Activated CD4-positive, alpha-beta memory T cell treated with anti-CD3 and anti-CD28 coated beads for 36 hours (primary cell): ENCODE measurements at regions of chr14 and their contacts with region 1.

Region 1: DNA sequence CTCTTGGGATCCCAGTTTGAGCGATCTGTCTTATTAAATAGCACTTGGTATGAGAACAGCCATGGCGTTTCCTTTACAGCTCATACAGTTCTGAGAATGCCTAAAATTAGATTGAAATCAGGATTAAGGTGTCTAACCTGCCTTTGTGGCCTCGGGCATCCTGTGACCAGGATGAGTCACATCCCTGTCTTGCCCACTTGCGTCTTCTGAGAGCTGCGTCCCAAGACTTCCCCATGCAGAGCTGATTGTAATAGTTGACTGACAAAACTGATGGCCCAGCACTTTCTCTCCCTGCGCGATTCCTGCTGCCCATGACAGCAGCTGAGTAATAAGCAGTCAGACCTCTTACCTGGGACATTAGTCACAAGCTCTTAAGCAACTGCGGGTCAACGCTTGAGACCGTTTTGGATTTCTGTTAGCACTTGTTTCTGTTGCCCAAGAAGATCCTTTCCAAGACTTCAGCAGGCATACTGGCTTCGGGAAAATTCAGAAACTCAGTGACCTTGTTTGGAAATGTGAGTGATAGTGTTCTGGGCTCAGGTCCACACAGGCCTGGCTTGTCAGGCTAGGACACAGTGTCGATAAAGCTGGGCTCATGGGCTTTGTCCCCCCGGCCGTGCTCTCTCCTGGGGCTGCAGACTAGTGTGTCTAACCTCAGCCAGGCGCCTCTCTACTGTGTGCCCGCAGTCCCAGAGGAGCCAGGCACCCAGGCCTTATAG is 169.9 kb upstream of the HIF1A start:
- DNase-seq: peak; percentile 92
- H3K4me3 Mint-ChIP-seq: peak overlapping the region; percentile 63
- H3K27ac Mint-ChIP-seq: peak overlapping the region; percentile 91
- H3K4me1 Mint-ChIP-seq: peaks cover 88% of the 10 kb centered on the region
- H3K27me3 Mint-ChIP-seq: no peaks in the 10 kb centered on the region

Region 2: GRCh38 chr14:61385002-61385685 is 140.3 kb before region 1 on chr14:
- CTCF ChIA-PET with region 1: no interaction called
- POLR2A ChIA-PET with region 1: no interaction called
- intact Hi-C with region 1: no loop called
- DNase-seq: peak; percentile 73
- H3K4me3 Mint-ChIP-seq: no peak overlapping the region
- H3K27ac Mint-ChIP-seq: no peak overlapping the region
- H3K4me1 Mint-ChIP-seq: peaks cover 29% of the 10 kb centered on the region
- H3K27me3 Mint-ChIP-seq: no peaks in the 10 kb centered on the region

Region 3: DNA sequence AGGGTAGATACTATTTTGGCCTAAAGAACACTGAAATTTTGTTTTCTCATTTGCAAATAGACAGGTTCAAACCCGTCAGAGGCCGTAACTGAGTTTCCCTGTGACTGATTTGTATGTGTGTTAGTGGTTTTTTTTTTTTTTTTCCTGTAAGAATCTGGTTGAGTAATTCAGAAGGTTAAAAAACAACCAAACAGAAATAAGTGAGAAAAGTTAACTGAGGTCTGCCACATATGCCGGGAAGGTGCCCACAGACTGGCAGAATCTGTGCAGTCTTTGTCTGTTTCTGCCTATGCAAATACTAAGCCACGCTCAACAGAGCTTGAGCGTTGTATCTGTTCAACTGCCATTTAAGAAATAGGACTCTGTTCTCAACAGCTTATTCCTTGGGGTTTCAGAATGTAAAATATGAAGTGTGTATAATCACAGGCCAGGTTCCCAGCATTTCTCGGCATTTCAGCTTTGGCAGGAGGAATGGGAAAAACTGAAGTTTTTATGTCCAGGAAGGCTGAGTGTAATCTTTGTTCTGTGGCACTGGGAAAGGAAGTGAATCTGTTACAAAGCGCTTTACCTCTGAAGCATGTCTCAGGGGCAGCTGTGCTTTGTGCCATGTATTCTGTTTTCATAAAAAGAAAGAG is 22.2 kb before region 1 on chr14:
- CTCF ChIA-PET with region 1: interaction called, 12 read pairs
- POLR2A ChIA-PET with region 1: interaction called, 9 read pairs
- intact Hi-C with region 1: loop called (anchors 1 kb)
- DNase-seq: peak; percentile 90
- H3K4me3 Mint-ChIP-seq: peak overlapping the region; percentile 62
- H3K27ac Mint-ChIP-seq: peak overlapping the region; percentile 98
- H3K4me1 Mint-ChIP-seq: peaks cover 98% of the 10 kb centered on the region
- H3K27me3 Mint-ChIP-seq: no peaks in the 10 kb centered on the region

Region 4: DNA sequence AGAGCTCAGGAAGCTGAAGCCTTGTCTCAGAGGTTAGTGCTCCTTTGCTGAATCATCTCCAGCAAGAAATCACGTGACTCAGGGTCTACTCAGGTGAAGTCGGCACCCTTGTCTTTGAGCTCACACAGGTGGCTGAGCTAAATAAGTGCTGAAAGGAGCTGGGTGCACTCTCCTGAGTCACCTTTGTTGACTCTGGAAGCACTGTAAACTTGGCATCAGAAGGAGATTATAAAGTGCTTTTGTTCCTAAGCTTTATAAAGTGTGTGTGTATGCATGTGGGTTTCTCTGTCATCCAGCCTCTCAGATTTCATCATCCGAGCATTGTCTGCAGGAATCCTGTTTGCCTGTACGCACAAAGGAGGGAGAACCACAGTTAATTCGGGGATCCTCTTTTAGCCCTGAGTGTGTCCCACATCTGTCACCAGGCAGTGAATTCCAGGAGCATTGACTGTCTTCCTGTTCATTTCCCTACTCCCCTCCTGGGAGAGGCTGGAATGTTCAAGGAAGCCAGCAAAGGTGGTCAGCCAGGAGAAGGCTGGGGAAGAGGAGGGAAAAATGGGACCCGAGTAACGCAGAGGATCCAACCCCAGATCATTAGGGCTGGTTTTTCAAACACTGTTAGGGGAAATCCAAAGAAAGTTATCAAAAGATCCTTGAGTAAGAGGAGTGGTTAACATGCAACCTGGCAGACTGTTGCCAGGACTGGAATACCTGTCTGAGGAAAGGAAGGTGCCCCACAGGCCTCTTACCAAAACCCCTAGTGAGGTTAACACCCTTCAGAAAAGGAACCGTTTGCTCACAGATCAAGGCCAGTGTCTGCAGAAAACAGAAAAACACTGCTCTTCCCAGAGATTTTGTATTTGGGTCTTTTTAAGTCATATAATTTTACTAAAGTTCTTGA is 12.4 kb after region 1 on chr14:
- CTCF ChIA-PET with region 1: no interaction called
- POLR2A ChIA-PET with region 1: interaction called, 6 read pairs
- intact Hi-C with region 1: loop called (anchors 1 kb)
- DNase-seq: peak; percentile 71
- H3K4me3 Mint-ChIP-seq: peak overlapping the region; percentile 1
- H3K27ac Mint-ChIP-seq: peak overlapping the region; percentile 77
- H3K4me1 Mint-ChIP-seq: peaks cover 81% of the 10 kb centered on the region
- H3K27me3 Mint-ChIP-seq: no peaks in the 10 kb centered on the region

Region 5: DNA sequence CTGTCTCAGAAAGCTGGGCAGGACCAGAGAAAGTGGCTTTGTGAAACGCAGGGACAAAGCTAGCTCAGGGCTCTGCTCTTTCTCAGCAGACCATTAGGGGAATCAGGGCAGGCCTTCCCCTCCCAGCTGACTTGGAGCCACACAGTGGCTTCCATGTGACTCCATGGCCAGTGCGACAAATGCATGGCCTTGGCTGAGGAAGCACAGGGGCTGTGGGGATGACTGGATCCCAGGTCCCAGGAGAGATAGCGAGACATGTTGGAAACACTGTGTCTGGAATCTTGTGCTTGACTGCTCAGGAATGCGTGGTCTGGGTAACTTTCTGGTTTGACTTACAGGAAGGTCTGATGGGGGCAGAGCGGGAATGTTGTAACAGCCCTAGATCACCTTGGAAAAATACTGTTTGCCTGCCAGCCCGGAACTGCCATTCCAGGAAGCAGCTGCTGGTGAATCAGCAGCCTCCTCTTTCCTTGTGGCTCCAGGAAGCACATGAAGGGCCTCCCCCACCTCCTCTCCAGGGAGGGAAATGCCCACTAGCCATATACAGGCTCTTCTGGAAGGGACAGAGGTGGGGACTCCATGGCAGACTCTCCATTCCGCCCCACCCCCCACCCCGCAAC is 36.3 kb after region 1 on chr14:
- CTCF ChIA-PET with region 1: interaction called, 5 read pairs
- POLR2A ChIA-PET with region 1: interaction called, 16 read pairs
- intact Hi-C with region 1: loop called (anchors 1 kb)
- DNase-seq: no peak
- H3K4me3 Mint-ChIP-seq: no peak overlapping the region
- H3K27ac Mint-ChIP-seq: peak overlapping the region; percentile 83
- H3K4me1 Mint-ChIP-seq: peaks cover 66% of the 10 kb centered on the region
- H3K27me3 Mint-ChIP-seq: no peaks in the 10 kb centered on the region